Left colon (tissue), 2 donors: ENCODE measurements at regions of chr4 and their contacts with region 1.

Region 1: DNA sequence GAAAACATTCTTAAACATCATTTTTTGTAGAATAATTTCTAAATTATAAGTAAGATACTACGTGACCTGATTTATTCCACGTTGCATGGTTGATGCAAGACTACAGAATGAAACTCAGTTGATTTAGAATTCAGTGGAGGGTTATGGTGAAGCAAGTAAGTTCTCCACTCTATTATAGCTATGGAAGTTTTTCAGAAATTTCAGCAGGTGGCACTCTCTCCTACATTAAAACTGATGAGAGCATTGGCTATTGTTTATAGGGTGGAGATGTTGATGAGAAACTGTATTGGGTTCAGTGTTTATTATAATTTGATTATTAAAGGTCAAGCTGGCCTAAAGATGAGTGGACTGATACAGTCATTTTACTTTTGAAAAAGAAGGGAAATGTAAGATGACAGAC is 88.0 kb downstream of the FNIP2 start:
- DNase-seq: no peak
- ATAC-seq: peak; percentile 81

Region 2: GRCh38 chr4:158722917-158723793 is 133.7 kb before region 1 on chr4 and contains the start of gene PPID:
- intact Hi-C with region 1: loop called in 1 of 2 experiments (anchors 10 kb)
- DNase-seq: peak; percentile 87 to 91
- ATAC-seq: peak; percentile 97
- total RNA-seq, gene PPID: 16.4 to 19.7 TPM

Region 3: GRCh38 chr4:159016593-159017024 is 159.8 kb after region 1 on chr4:
- intact Hi-C with region 1: no loop called
- DNase-seq: no peak
- ATAC-seq: no peak

Region 4: DNA sequence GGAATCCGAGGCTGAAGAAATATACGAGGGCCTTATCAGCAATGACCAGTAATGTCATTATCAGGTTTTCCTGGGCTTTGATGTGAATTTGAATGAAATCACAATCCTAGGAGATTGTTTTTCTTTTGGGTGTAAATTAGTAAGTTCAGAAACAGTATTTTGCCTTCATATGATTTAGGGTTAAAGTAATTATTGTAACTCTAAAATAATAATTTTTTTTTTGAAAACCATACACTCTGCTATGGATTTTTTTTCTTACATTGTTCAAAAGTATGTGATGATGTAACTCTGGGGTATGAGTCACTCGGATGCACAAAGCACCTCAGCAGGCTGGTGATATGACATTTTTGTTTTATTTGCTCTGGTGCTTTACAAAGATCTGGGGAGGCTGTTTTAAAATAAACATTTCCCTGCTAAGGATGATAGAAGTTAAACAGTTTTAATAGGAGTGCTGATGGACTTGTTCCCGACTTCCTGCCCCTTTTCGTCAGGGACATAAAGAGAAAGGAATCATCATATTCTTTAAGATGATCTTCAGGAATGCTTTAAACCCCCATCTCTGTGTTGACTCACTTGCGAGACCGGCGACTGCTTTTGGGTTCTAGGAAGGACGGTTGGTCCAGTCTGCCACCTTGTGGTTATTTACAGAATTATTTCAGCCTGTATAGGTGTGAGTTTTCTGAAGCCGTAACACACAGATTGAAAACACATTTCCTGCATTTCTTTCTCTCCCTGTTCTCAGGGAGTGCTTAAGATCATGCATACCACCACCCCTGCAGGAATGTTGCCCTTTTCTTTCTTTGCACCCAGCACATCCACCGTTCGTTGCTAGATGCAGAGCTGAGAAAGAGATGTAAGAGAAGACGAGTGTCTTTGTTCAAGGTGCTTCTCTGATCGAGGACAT is 318.5 kb after region 1 on chr4:
- intact Hi-C with region 1: loop called (anchors 10 kb)
- DNase-seq: peak; percentile 49
- ATAC-seq: peak; percentile 89

Region 5: GRCh38 chr4:159201168-159201567 is 344.3 kb after region 1 on chr4:
- intact Hi-C with region 1: loop called in 1 of 2 experiments (anchors 5 kb)
- DNase-seq: no peak
- ATAC-seq: no peak